ENCODE measurements at regions of chr3 and their contacts with region 1.

Region 1: GRCh38 chr3:175432376-175433025 is 573.4 kb downstream of the NAALADL2 start:
- DNase-seq: peak; percentile 56
- ATAC-seq: no peak; the same call in 1 of the 2 replicates
- H3K4me3 ChIP-seq: peak overlapping the region; percentile 25; the same call in 1 of the 2 replicates
- H3K27ac ChIP-seq: peak overlapping the region; percentile 95
- H3K4me1 ChIP-seq: peaks cover 7% of the 10 kb centered on the region; the same call in 1 of the 2 replicates
- H3K27me3 ChIP-seq: no peaks in the 10 kb centered on the region
- CTCF ChIP-seq: no peak
- POLR2A ChIP-seq: no peak
- RAD21 ChIP-seq: no peak

Region 2: DNA sequence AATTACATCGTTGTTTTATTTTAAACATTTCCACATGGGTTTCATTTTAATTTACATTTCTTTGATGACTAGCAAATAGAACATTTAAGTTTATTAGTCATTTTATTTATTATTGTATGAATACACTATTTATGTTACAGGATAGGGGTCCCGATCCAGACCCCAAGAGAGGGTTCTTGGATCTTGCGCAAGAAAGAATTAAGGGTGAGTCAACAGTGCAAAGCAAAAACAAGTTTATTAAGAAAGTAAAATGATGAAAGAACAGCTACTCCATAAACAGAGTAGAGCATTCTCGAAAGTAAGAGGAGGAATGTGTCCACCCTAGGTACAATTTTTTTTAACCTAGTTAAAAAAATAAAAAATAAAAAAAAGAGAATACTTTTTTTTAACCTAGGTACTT is 33.8 kb before region 1 on chr3:
- CTCF ChIA-PET with region 1: no interaction called
- POLR2A ChIA-PET with region 1: no interaction called
- dilution Hi-C with region 1: no loop called
- in situ Hi-C with region 1: no loop called
- intact Hi-C with region 1: loop called (anchors 2 kb)
- DNase-seq: peak; percentile 88
- ATAC-seq: peak; percentile 82
- H3K4me3 ChIP-seq: no peak overlapping the region
- H3K27ac ChIP-seq: no peak overlapping the region
- H3K4me1 ChIP-seq: peaks cover 12% of the 10 kb centered on the region
- H3K27me3 ChIP-seq: no peaks in the 10 kb centered on the region
- CTCF ChIP-seq: no peak
- POLR2A ChIP-seq: no peak
- RAD21 ChIP-seq: no peak

Region 3: GRCh38 chr3:175957002-175957401 is 524.5 kb after region 1 on chr3:
- CTCF ChIA-PET with region 1: no interaction called
- POLR2A ChIA-PET with region 1: no interaction called
- dilution Hi-C with region 1: no loop called
- in situ Hi-C with region 1: no loop called
- intact Hi-C with region 1: loop called (anchors 10 kb)
- DNase-seq: peak; percentile 10
- ATAC-seq: peak; percentile 56
- H3K4me3 ChIP-seq: no peak overlapping the region
- H3K27ac ChIP-seq: no peak overlapping the region
- H3K4me1 ChIP-seq: no peaks in the 10 kb centered on the region
- H3K27me3 ChIP-seq: no peaks in the 10 kb centered on the region
- CTCF ChIP-seq: peak; percentile 40; the same call in 1 of the 2 replicates
- POLR2A ChIP-seq: no peak
- RAD21 ChIP-seq: peak; percentile 26; the same call in 1 of the 2 replicates

Measured in IMR-90 (cell line).